Aorta (tissue), 5 donors: ENCODE measurements at regions of chr15 and their contacts with region 1.

Region 1: DNA sequence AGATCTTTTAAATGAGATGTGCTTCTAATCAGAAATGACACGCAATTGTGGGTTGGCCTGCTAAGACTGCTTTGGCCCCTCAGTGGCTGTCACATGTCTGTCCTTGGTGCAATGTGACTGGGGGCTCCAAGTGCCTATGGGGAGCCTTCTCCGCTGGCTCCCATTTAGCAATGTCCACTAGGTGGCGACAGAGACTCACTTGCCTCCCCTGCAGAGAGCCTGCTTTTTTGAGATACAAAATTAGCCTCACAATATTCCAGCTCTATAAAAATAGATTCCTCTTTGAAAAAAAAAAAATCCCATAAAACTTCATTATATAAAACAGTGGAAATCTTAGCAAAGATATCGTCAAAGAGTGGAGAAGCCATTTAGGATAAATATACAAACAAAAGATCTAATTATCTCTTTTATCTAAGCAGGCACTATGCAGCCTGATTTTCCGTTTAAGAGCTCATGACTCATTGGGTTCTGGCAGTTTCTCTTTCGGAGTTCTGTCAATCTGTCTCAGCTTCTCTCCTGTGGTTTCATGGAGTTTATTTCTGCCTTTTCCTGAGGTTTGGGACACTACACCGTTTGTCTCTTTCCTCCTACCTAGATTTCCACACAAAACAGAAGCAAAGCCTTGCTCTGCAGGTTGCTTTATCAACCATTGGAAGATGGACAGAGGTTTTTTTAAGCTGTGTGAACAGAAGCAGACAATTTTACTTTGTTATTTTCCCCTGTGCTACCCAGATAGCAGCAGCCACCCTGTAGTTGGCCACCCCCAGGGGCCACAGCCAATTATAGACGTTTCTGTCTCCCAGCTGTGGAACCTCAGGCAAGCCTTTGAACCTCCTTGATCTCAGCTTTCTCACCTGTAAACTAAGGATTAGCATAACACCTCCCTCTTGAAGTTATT is 68.4 kb upstream of the TNFAIP8L3 start:
- DNase-seq: peak; percentile 80 to 86
- ATAC-seq: peak; percentile 94
- H3K4me3 ChIP-seq: no peak overlapping the region
- H3K27ac ChIP-seq: peak overlapping the region; percentile 91
- H3K4me1 ChIP-seq: no peaks in the 10 kb centered on the region
- H3K27me3 ChIP-seq: no peaks in the 10 kb centered on the region

Region 2: DNA sequence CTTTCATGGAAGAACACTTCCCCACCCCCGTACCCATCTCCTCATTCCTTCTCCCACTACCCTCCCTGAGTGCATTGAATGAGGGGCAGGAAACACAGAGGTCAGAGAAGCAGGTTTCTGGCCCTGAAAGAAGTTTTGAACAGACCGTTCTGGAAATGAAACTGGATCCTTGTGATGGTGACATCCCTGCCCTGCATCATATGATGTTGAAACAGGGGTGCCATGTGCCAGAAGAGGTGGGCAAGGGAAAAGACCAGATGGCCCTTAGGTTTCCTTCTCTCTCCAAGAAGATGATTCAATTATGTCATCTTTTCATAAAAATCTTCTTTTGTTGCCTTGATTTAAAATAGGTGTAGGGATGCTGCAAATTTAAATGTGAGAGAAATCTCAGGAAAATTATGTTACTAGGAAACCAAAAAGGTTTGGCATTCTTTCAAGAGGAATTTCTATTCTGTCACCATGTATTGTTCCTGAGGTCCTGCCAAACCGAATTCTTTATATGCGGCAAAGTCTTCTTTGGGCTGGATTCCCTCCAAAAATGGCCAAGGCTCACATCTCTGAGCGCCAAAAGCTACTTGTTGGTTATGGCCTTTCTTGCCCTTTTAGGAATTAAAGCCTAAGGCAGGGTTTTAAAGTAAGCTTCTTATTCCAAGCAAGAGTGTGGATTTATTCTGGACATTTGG is 48.5 kb before region 1 on chr15:
- intact Hi-C with region 1: loop called in 1 of 2 experiments (anchors 5 kb)
- DNase-seq: peak in 1 of 2 donors; percentile 50
- ATAC-seq: no peak
- H3K4me3 ChIP-seq: no peak overlapping the region
- H3K27ac ChIP-seq: peak overlapping the region; percentile 34 to 85
- H3K4me1 ChIP-seq: peaks cover 3 to 10% of the 10 kb centered on the region in 2 donors
- H3K27me3 ChIP-seq: no peaks in the 10 kb centered on the region

Region 3: GRCh38 chr15:51132384-51133139 is 30.6 kb before region 1 on chr15:
- intact Hi-C with region 1: no loop called
- DNase-seq: peak; percentile 69 to 87
- ATAC-seq: peak; percentile 88
- H3K4me3 ChIP-seq: no peak overlapping the region
- H3K27ac ChIP-seq: peak overlapping the region in 1 of 2 donors; percentile 48
- H3K4me1 ChIP-seq: peaks cover 0 to 4% of the 10 kb centered on the region in 2 donors
- H3K27me3 ChIP-seq: no peaks in the 10 kb centered on the region

Region 4: GRCh38 chr15:51192521-51193280 is 29.6 kb after region 1 on chr15:
- intact Hi-C with region 1: loop called (anchors 1 to 2 kb)
- DNase-seq: peak; percentile 94 to 97
- ATAC-seq: peak; percentile 92
- H3K4me3 ChIP-seq: no peak overlapping the region
- H3K27ac ChIP-seq: peak overlapping the region; percentile 33 to 68
- H3K4me1 ChIP-seq: peaks cover 4 to 7% of the 10 kb centered on the region in 2 donors
- H3K27me3 ChIP-seq: no peaks in the 10 kb centered on the region

Region 5: GRCh38 chr15:51227940-51228783 is 65.0 kb after region 1 on chr15:
- intact Hi-C with region 1: loop called in 1 of 2 experiments (anchors 5 kb)
- DNase-seq: peak; percentile 75 to 81
- ATAC-seq: peak; percentile 75
- H3K4me3 ChIP-seq: no peak overlapping the region
- H3K27ac ChIP-seq: peak overlapping the region; percentile 44 to 51
- H3K4me1 ChIP-seq: peaks cover 3 to 9% of the 10 kb centered on the region in 2 donors
- H3K27me3 ChIP-seq: no peaks in the 10 kb centered on the region

Region 6: GRCh38 chr15:51281368-51281967 is 118.4 kb after region 1 on chr15:
- intact Hi-C with region 1: loop called (anchors 5 kb)
- DNase-seq: peak; percentile 82 to 90
- ATAC-seq: peak; percentile 90
- H3K4me3 ChIP-seq: no peak overlapping the region
- H3K27ac ChIP-seq: no peak overlapping the region
- H3K4me1 ChIP-seq: no peaks in the 10 kb centered on the region
- H3K27me3 ChIP-seq: no peaks in the 10 kb centered on the region

Region 7: DNA sequence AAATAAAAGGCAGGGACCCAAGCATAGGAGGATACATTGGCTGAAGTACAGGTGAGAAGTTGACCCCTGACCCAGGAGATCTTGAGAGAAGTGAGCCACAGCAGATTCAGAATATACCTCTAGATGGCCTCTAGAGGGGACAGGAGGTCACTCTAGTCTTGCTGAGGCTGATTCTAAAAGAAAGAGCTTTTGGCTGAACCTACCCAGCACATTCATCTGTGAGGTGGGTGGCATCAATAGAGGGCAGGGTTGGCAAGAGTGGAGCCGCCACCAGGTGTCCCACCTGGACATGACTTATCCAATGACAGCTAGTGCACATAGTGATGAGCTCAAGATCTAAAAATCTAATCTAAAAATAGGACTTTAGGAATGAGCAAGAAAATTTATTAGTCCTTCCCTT is 123.7 kb after region 1 on chr15:
- intact Hi-C with region 1: loop called (anchors 5 kb)
- DNase-seq: no peak
- ATAC-seq: no peak
- H3K4me3 ChIP-seq: no peak overlapping the region
- H3K27ac ChIP-seq: no peak overlapping the region
- H3K4me1 ChIP-seq: no peaks in the 10 kb centered on the region
- H3K27me3 ChIP-seq: no peaks in the 10 kb centered on the region

Region 8: DNA sequence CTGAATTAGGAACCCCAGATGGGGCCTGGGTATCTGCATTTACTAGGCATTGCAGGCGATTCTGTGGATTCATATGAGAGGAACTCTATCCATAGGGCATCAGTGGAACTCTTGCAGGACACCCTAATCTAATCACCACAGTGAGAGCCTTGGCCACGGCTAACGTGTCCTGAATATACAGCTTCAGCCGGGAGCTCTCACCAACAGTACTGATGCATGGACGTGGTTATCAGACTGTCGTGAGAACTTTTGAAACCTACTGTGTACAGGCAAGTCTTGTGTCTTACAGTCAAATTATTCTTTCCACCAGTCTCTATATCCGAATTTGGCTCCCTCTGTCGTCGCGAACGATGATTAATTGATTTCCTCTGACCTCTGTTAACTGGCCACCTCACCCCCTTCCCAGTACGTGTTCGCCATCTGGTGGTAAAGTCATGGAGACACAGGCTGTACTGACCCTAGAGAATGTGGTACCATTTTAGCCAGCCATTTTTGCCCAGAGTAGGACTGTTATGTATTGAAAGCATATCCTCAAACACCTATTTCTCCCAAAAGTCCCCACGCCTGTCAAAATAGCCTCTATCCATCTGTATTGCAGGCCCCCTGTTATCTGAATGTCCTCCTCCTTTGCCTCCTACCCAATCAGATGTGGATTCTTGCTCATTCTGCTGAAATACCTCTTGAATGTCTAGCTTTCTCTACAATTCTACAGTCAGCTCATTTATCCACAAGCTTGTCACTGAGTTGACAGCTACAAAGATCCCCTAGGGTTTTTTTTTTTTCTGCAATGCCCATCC is 218.1 kb after region 1 on chr15:
- intact Hi-C with region 1: loop called (anchors 2 to 5 kb)
- DNase-seq: peak in 1 of 2 donors; percentile 69
- ATAC-seq: peak; percentile 92
- H3K4me3 ChIP-seq: no peak overlapping the region
- H3K27ac ChIP-seq: no peak overlapping the region
- H3K4me1 ChIP-seq: no peaks in the 10 kb centered on the region
- H3K27me3 ChIP-seq: no peaks in the 10 kb centered on the region